Naive thymus-derived CD4-positive, alpha-beta T cell (primary cell): ENCODE measurements at regions of chr6 and their contacts with region 1.

Region 1: GRCh38 chr6:25223490-25223991 is 55.6 kb upstream of the CARMIL1 start:
- DNase-seq: peak; percentile 32 to 63 (median 58)
- ATAC-seq: peak; percentile 78
- H3K4me3 ChIP-seq: peak overlapping the region; percentile 16
- H3K4me3 Mint-ChIP-seq: peak overlapping the region; percentile 31 to 85 (median 67)
- H3K27ac ChIP-seq: no peak overlapping the region
- H3K27ac Mint-ChIP-seq: no peak overlapping the region
- H3K4me1 ChIP-seq: peaks cover 0 to 6% of the 10 kb centered on the region in 2 donors
- H3K4me1 Mint-ChIP-seq: peaks cover 9 to 14% (median 11%) of the 10 kb centered on the region in 7 donors
- H3K27me3 ChIP-seq: no peaks in the 10 kb centered on the region
- H3K27me3 Mint-ChIP-seq: peaks cover 0 to 22% (median 8%) of the 10 kb centered on the region in 5 donors

Region 2: DNA sequence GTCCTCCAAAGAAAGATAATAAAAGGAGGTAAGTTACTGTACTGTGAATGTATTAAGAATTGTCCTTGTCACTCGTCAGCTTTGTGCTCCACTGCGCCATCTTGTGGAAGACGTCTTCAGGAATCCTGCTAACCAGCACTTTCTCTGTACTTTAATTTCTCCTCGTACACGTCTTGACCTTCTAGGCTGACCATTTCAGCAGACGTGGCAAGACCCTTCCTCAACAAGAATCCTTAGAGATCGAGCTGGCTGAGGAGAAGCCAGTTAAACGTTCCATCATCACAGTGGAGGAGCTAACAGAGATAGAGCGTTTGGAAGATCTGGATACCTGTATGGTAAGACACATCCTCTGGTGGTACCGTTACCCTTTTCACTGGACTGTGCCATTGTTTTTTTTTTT is 333.0 kb after region 1 on chr6:
- CTCF ChIA-PET with region 1: interaction called, 15 read pairs
- POLR2A ChIA-PET with region 1: no interaction called
- intact Hi-C with region 1: loop called (anchors 1 kb)
- DNase-seq: peak; percentile 14 to 72 (median 55)
- ATAC-seq: peak; percentile 71
- H3K4me3 ChIP-seq: no peak overlapping the region
- H3K4me3 Mint-ChIP-seq: no peak overlapping the region
- H3K27ac ChIP-seq: no peak overlapping the region
- H3K27ac Mint-ChIP-seq: no peak overlapping the region
- H3K4me1 ChIP-seq: no peaks in the 10 kb centered on the region
- H3K4me1 Mint-ChIP-seq: peaks cover 0 to 6% (median 3%) of the 10 kb centered on the region in 7 donors
- H3K27me3 ChIP-seq: no peaks in the 10 kb centered on the region
- H3K27me3 Mint-ChIP-seq: peaks cover 0 to 6% (median 0%) of the 10 kb centered on the region in 5 donors

Region 3: GRCh38 chr6:25717866-25718740 is 494.6 kb after region 1 on chr6:
- CTCF ChIA-PET with region 1: interaction called, 4 read pairs
- POLR2A ChIA-PET with region 1: no interaction called
- intact Hi-C with region 1: loop called in 1 of 2 experiments (anchors 2 kb)
- DNase-seq: peak in 4 of 9 donors; percentile 4 to 14 (median 10)
- ATAC-seq: no peak
- H3K4me3 ChIP-seq: no peak overlapping the region
- H3K4me3 Mint-ChIP-seq: no peak overlapping the region
- H3K27ac ChIP-seq: no peak overlapping the region
- H3K27ac Mint-ChIP-seq: no peak overlapping the region
- H3K4me1 ChIP-seq: no peaks in the 10 kb centered on the region
- H3K4me1 Mint-ChIP-seq: no peaks in the 10 kb centered on the region
- H3K27me3 ChIP-seq: no peaks in the 10 kb centered on the region
- H3K27me3 Mint-ChIP-seq: peaks cover 0 to 32% (median 12%) of the 10 kb centered on the region in 5 donors

Region 4: DNA sequence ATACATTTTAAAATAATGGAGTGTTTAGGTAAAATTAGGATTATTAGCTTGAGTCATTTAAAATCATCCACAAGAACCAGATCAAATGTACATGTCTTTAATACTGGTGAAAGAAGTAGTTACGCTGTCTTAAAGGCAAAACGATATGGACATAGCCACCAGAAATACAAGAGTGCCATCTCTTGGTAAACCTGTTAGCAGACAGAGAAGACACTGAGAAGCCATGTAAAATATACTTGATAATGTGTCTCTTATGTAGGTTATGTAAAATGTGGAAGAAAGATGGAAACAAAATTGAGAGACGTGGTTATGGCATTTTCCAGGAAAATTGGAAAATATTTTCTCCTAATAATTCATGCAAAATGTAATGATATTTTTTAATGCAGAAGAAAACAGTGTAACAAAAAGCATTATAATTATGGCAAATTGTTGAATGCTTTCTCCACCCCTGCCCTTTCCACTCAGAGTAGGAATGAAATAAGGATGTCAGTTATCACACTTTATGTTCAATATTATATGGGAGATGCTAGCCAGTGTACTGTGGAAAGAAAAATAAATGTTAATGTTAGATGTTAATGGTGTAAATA is 719.1 kb after region 1 on chr6:
- CTCF ChIA-PET with region 1: no interaction called
- POLR2A ChIA-PET with region 1: no interaction called
- intact Hi-C with region 1: loop called in 1 of 2 experiments (anchors 1 kb)
- DNase-seq: peak in 6 of 9 donors; percentile 11 to 42 (median 27)
- ATAC-seq: peak; percentile 62
- H3K4me3 ChIP-seq: no peak overlapping the region
- H3K4me3 Mint-ChIP-seq: no peak overlapping the region
- H3K27ac ChIP-seq: no peak overlapping the region
- H3K27ac Mint-ChIP-seq: no peak overlapping the region
- H3K4me1 ChIP-seq: no peaks in the 10 kb centered on the region
- H3K4me1 Mint-ChIP-seq: peaks cover 4 to 26% (median 7%) of the 10 kb centered on the region in 7 donors
- H3K27me3 ChIP-seq: no peaks in the 10 kb centered on the region
- H3K27me3 Mint-ChIP-seq: peaks cover 0 to 3% (median 0%) of the 10 kb centered on the region in 5 donors